GM13977 (cell line): ENCODE measurements at regions of chr6 and their contacts with region 1.

Region 1: GRCh38 chr6:135426833-135427232 is 70.7 kb downstream of the AHI1 start:
- DNase-seq: no peak
- CTCF ChIP-seq: no peak

Region 2: GRCh38 chr6:135191508-135192255 is 235.2 kb before region 1 on chr6:
- in situ Hi-C with region 1: loop called (anchors 5 kb)
- DNase-seq: no peak
- CTCF ChIP-seq: no peak